Activated CD8-positive, alpha-beta memory T cell treated with anti-CD3 and anti-CD28 coated beads, Interleukin-2, amount 10 ng/mL, durations not matched to agents 7 days and 5 days (primary cell): ENCODE measurements at regions of chr9 and their contacts with region 1.

Region 1: DNA sequence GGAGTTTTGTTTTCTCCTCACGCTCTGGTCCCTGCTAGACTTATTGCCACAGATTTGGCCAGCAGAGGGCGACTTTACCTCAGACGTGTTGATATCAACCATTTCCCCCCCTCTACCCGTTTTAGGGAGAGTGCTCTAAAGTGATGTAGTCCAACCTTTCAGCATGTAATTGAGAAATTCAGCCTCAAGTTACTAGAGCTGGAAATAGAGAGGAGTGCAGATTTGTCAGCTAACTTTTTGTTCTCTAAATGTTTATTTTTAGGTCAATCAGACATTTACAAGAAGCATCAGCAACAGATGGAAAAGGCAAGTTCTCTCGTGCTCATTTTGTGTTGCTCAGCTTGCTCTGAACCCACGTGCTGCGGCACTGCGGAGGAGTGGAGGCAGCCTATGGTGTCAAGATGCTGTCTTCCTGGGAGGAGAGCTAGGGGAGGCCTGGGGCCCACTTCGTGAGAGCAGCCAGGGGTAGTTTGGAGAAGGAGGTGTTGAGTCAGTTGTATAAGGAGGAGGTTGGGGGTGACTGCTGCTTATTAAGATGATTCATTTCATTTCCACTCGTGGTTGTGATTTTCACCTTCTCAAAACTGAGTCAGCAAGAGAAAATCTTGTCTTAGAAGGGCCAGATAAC is 53.6 kb downstream of the GPR107 start:
- DNase-seq: peak; percentile 89
- ATAC-seq: peak; percentile 82
- H3K4me3 Mint-ChIP-seq: no peak overlapping the region
- H3K27ac Mint-ChIP-seq: peak overlapping the region; percentile 80
- H3K4me1 Mint-ChIP-seq: peaks cover 43% of the 10 kb centered on the region
- H3K27me3 Mint-ChIP-seq: no peaks in the 10 kb centered on the region

Region 2: GRCh38 chr9:129900263-129901027 is 206.9 kb before region 1 on chr9:
- CTCF ChIA-PET with region 1: no interaction called
- DNase-seq: no peak
- ATAC-seq: no peak
- H3K4me3 Mint-ChIP-seq: no peak overlapping the region
- H3K27ac Mint-ChIP-seq: peak overlapping the region; percentile 59
- H3K4me1 Mint-ChIP-seq: peaks cover 60% of the 10 kb centered on the region
- H3K27me3 Mint-ChIP-seq: no peaks in the 10 kb centered on the region

Region 3: GRCh38 chr9:130117816-130118632 is 10.7 kb after region 1 on chr9:
- CTCF ChIA-PET with region 1: interaction called, 18 read pairs
- DNase-seq: no peak
- ATAC-seq: no peak
- H3K4me3 Mint-ChIP-seq: no peak overlapping the region
- H3K27ac Mint-ChIP-seq: no peak overlapping the region
- H3K4me1 Mint-ChIP-seq: peaks cover 2% of the 10 kb centered on the region
- H3K27me3 Mint-ChIP-seq: no peaks in the 10 kb centered on the region

Region 4: DNA sequence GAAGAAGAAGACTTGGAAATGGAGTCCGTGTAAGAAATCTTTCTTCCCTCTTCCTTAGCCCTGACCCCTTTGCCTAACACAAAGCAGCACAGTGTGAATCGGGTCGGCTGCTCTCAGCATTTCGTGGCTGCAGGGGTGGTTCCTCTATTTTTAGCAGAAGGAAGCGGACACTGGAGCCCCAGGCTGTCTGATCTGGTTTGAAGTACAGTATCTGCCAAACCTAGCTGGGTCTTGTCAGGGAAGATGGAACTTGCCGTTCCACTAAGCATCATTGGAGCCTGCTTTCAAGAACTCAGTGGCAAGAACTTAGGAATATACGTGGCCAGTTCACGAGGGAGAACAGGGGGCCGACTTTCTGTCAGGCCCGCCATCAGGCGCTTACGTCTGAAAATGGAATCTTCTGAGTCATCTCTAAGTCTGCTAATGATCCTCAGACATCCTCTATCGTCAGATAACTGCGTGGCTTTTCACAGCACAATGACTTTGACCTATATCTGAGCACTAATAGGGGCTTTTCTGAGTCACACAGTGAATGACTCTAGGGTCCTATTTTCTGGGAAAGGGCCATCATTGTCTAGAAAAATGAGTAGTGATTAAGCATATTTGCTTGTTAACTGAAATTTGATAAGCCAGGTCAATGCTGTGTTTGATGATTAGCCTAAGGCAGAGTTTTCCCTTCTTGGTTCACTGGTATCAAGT is 21.5 kb after region 1 on chr9:
- CTCF ChIA-PET with region 1: interaction called, 28 read pairs
- DNase-seq: peak; percentile 81
- ATAC-seq: peak; percentile 83
- H3K4me3 Mint-ChIP-seq: peak overlapping the region; percentile 62
- H3K27ac Mint-ChIP-seq: peak overlapping the region; percentile 99
- H3K4me1 Mint-ChIP-seq: peaks cover 51% of the 10 kb centered on the region
- H3K27me3 Mint-ChIP-seq: no peaks in the 10 kb centered on the region

Region 5: DNA sequence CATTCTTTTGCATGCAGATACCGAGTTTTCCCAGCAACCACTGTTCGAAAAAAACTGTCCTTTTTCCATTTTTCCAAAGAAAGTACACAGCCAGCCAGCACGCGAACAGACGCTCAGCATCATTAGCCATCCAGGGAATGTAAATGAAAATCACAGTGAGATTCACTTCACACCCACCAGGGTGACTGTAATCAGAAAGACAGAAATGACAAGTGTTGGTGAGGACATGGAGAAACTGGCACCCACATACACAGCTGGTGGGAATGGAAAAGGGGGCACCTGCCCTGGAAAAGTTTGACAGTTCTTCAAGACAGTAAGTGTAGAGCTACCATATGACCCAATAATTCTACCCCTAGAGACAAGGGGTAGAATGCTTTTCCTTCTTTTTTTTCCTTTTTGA is 39.9 kb after region 1 on chr9:
- CTCF ChIA-PET with region 1: interaction called, 11 read pairs
- DNase-seq: no peak
- ATAC-seq: no peak
- H3K4me3 Mint-ChIP-seq: no peak overlapping the region
- H3K27ac Mint-ChIP-seq: no peak overlapping the region
- H3K4me1 Mint-ChIP-seq: peaks cover 15% of the 10 kb centered on the region
- H3K27me3 Mint-ChIP-seq: peaks cover 40% of the 10 kb centered on the region

Region 6: GRCh38 chr9:130243015-130243734 is 135.8 kb after region 1 on chr9:
- CTCF ChIA-PET with region 1: interaction called, 197 read pairs
- DNase-seq: peak; percentile 89
- ATAC-seq: peak; percentile 87
- H3K4me3 Mint-ChIP-seq: peak overlapping the region; percentile 7
- H3K27ac Mint-ChIP-seq: peak overlapping the region; percentile 31
- H3K4me1 Mint-ChIP-seq: peaks cover 34% of the 10 kb centered on the region
- H3K27me3 Mint-ChIP-seq: no peaks in the 10 kb centered on the region